ENCODE measurements at regions of chr1 and their contacts with region 1.

Region 1: DNA sequence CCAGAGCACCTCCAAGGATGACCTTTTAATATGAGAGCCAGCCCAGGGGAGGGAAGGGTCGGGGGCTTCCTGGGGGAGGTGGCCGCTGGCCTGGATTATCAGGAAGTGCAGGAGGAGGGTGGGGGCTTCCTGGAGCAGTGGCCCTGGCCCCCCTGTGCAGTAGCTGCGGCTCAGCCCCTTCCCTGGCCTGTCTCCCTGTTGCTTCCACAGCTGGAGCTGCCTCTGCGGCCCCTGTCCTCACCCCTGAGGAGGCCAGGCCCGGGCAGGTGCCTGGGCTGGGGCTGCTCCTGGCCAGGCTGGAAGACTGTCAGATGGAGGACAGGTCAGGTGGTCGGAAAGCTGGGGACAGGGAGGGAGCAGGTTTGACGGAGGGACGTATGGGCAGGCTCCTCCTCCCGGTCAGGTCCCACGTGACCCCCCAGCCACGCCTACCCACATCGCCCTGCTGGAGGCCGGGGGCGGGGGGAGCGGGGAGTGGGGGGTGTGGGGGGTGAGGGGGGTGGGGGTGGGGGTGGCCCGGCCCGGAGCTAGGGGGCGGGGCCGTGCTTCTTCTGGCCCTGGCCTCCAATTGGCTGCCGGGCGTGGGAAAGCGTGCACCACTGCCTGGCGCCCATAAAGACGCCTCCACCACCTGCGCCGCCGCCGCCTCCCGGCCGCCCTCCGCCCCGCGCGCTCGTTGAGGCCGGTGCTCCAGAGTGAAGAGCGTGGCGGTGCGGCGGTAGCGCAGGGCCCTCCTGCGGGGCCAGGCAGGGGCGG is 10.2 kb upstream of the TNFRSF14 start:
- DNase-seq: peak; percentile 96

Region 2: GRCh38 chr1:2194898-2195673 is 350.9 kb before region 1 on chr1:
- intact Hi-C with region 1: loop called (anchors 5 kb)
- DNase-seq: peak; percentile 95

Region 3: GRCh38 chr1:2412519-2413233 is 133.3 kb before region 1 on chr1 and contains the start of gene PEX10:
- intact Hi-C with region 1: loop called (anchors 1 kb)
- DNase-seq: peak; percentile 99
- total RNA-seq, gene PEX10: 18.1 TPM

Region 4: DNA sequence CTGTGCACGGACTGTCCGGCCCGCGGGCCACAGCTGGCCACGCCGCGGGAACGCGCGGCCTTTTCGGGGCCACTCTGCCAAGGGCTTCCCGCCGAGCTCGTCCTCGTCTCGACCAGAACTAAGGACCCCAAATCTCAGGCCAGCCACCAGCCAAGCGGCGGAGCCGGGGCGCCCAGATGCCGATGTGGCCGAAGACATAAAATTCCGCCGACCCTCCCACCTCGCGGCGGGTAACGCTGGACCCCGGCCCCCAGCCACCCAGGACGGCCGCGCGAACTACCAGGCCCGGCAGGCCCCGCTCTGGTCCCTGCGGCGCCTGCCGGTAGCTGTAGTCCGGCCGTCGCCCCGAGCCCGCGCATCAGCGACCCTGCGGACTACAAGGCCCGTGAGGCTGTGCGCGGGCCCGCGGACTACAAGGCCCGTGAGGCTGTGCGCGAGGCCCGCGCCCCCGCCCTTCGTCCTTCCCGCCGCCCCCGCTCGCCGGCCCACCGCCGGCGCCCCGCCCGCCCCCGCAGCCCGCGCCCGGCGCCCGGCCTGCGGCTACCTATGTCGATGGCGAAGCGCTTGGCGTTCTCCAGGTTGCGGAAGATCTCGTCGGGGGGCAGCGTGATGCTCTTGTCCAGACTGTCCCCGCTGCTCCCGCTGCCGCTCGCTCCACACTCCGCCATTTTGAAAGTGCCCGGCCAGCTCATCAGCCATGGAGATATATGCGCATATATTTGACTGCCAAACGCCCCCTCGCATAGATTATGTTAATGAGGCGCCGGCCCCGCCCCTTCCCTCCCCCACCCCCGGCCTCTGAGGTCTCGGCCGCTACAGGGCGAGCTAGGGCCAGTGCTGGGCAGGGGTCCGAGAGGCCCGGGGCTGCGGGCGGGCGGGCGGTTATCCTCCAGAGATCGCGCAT is 19.8 kb before region 1 on chr1 and contains the start of gene PANK4:
- intact Hi-C with region 1: loop called (anchors 1 kb)
- DNase-seq: peak; percentile 95
- total RNA-seq, gene PANK4: 37.1 TPM

Region 5: DNA sequence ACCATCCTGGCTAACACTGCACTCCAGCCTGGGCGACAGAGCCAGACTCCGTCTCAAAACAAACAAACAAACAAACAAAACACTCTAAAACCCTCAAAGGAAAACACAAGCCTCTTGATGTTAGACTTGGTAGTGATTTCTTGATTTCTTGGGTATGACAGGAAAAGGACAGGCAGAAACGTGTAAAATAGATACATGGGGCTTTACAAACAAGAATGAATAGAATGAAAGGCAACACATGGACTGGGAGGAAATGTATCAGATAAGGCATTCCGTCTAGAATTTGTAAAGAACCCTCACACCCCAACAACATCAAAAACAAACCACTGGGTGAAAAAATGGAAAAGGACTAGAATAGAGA is 32.8 kb after region 1 on chr1:
- intact Hi-C with region 1: loop called (anchors 2 kb)
- DNase-seq: no peak